ENCODE measurements at regions of chr17 and their contacts with region 1.

Region 1: DNA sequence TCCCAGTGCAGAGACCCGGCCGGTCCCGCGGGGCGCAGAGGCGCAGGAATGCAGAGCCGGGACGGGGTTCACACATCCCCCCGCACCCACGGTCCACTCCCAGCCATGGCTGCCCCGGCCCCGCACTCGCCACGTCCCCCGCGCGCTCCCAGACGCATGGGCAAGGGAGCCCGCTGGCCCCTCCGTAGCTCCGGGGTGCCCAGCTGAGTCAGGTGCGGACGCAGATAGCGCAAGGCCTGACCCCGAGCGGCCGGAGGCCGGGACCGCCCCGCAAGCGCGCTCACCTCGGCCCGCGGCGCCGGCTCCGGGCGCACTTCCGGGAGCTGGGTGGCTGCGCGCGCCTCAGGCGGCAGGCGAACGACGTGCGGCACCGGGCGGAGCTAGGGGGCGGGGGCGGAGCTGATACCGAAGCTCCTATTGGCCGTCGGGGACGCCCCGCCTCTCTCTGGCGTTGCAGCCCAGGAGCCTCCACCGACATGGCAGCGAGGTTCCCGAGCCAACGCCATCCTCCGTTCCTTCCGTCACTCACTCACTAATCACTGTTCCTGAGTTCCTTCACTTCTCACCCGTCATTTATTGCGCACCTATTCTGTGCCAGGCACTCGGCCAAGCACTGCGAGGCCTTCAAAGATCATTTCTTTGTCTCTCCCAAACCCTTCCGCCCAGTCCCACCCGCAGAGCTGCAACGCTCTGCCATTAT is at the start of gene ZNF18:
- DNase-seq: peak; percentile 93
- H3K27ac ChIP-seq: peak within 1 kb of the TSS; percentile 94
- CTCF ChIP-seq: no peak

Region 2: DNA sequence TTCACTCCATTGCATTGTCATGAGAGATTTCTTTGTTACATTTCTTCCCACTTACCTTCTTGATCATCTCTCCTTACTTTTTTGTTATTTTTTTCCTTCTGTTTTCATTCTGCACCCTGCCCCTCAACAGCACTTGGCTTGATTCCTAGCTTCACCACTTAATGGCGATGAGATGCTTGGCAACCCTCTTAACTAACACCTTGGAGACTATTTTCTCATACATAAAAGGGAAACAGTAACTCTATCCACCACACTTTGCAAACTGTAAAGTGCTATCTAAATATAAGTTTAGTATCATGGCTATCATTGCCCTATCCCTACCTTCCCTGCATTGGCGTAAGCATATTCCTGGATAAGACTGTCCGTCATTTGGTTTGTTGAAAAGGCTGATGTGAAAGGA is 579.0 kb before region 1 on chr17:
- CTCF ChIA-PET with region 1: no interaction called
- POLR2A ChIA-PET with region 1: no interaction called
- DNase-seq: no peak
- H3K27ac ChIP-seq: no peak overlapping the region
- CTCF ChIP-seq: no peak

Region 3: GRCh38 chr17:11768106-11768505 is 229.2 kb before region 1 on chr17:
- CTCF ChIA-PET with region 1: no interaction called
- POLR2A ChIA-PET with region 1: no interaction called
- DNase-seq: no peak
- H3K27ac ChIP-seq: no peak overlapping the region
- CTCF ChIP-seq: no peak

Region 4: DNA sequence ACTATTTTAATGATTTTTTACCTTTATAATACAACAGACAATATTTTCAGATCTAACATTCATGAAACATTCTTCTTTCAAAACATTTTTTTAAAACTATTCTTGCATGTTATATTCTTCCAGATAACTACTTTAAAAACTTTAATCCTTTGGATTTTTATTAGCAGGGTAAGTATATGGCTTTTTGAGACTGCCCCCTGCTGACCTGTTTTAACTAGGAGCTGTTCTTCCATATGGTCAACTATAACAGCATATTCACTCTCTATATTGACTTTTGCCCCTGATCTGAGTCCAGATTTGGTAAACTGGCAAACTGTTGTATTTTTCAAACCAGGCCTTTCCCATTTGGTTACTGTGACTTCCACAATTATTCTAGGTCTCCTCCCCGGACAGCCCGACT is 16.5 kb before region 1 on chr17:
- CTCF ChIA-PET with region 1: interaction called, 3 read pairs
- POLR2A ChIA-PET with region 1: interaction called, 15 read pairs
- DNase-seq: no peak
- H3K27ac ChIP-seq: no peak overlapping the region
- CTCF ChIP-seq: peak; percentile 17; the same call in 1 of the 2 replicates

Region 5: GRCh38 chr17:12020642-12021622 is 23.6 kb after region 1 on chr17 and contains the start of gene MAP2K4:
- CTCF ChIA-PET with region 1: interaction called, 3 read pairs
- POLR2A ChIA-PET with region 1: interaction called, 15 read pairs
- DNase-seq: peak; percentile 93
- H3K27ac ChIP-seq: peak within 1 kb of the TSS; percentile 80
- CTCF ChIP-seq: no peak

Measured in RWPE1 (cell line).